ENCODE measurements at regions of chr5 and their contacts with region 1.

Region 1: GRCh38 chr5:6712577-6713275 is 506 bp upstream of the TENT4A start:
- DNase-seq: peak; percentile 97
- H3K4me3 Mint-ChIP-seq: peak overlapping the region; percentile 86
- H3K27ac Mint-ChIP-seq: peak overlapping the region; percentile 93
- H3K4me1 Mint-ChIP-seq: peaks cover 32% of the 10 kb centered on the region
- H3K27me3 Mint-ChIP-seq: no peaks in the 10 kb centered on the region

Region 2: GRCh38 chr5:6350277-6351090 is 362.2 kb before region 1 on chr5:
- intact Hi-C with region 1: no loop called
- DNase-seq: no peak
- H3K4me3 Mint-ChIP-seq: no peak overlapping the region
- H3K27ac Mint-ChIP-seq: no peak overlapping the region
- H3K4me1 Mint-ChIP-seq: no peaks in the 10 kb centered on the region
- H3K27me3 Mint-ChIP-seq: no peaks in the 10 kb centered on the region

Region 3: GRCh38 chr5:6377905-6378765 is 334.6 kb before region 1 on chr5 and contains the start of gene MED10:
- intact Hi-C with region 1: loop called (anchors 2 kb)
- DNase-seq: peak; percentile 95
- H3K4me3 Mint-ChIP-seq: peak within 1 kb of the TSS; percentile 96
- H3K27ac Mint-ChIP-seq: peak within 1 kb of the TSS; percentile 93
- H3K4me1 Mint-ChIP-seq: peaks cover 37% of the 10 kb centered on the region
- H3K27me3 Mint-ChIP-seq: peaks cover 3% of the 10 kb centered on the region
- total RNA-seq, gene MED10: 53.3 and 56.5 TPM in 2 replicates

Region 4: DNA sequence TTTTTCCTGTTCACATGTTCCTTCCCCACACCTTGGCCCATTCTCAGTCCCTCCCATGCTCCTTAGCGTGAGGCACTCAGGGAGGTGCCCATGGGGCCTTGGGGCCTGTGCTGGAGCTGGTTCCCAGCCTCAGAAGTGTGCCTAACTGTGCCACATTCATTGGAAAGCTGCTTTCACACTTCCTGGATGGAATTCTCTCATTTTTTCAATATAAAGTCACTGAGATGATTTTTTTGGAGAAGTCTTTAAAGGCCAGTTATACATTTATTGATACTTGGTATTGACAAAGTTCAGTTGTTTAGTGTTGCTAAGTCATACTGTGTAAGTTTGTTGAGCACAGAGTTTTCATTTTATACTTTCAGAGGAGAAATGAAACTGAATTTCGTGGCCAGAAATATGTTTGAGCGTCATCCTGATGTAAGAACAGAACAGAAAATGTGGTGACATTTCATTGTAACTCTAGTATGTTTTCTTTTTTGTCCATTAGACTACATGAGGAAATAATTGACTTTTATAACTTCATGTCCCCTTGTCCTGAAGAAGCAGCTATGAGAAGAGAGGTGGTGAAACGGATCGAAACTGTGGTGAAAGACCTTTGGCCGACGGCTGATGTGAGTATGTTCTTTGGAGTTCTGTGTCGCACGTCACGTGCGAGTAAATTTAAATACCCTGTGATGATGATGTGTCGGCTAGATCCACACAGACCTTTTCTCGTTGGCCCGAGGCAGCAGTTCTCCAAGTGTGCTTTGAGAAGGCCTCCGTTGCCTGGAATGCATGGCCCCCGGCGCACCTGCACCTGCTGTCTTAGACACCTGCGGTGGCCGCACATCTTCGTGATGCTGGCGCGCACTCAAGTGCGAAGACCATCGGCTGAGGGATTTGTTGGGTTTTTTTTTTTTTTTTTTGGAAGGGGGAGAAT is 24.6 kb after region 1 on chr5:
- intact Hi-C with region 1: loop called (anchors 2 kb)
- DNase-seq: no peak
- H3K4me3 Mint-ChIP-seq: peak overlapping the region; percentile 50
- H3K27ac Mint-ChIP-seq: peak overlapping the region; percentile 93
- H3K4me1 Mint-ChIP-seq: peaks cover 43% of the 10 kb centered on the region
- H3K27me3 Mint-ChIP-seq: no peaks in the 10 kb centered on the region

Measured in activated T-helper 2 cell treated with anti-CD3 and anti-CD28 coated beads, Interferon-gamma antibody, Interleukin-2, Interleukin-4, amounts not matched to agents 10 μg/mL and 5 μg/mL and 100 μg/mL, durations not matched to agents 14 hours and 24 hours and 36 hours (primary cell).